Posterior vena cava (tissue), 2 donors: ENCODE measurements at regions of chr19 and their contacts with region 1.

Region 1: DNA sequence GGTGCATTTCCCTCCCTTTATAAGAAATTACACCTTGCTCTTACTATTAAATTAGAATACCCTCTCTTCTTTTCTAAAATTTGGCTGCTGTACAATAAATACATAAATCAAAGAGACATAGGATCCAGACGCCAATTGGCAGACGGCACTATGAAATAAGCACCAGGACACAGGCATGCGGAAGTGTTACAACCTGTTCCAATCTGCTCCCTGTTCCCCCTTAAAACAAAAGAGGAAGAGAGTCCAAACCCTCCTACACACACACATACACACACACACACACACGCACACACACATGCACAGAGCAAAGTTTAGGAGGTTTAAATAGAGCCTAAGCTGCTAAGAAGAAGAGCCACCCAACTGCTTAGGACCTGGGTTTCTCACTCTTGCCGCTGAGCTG is 75.6 kb upstream of the ZNF507 start:
- DNase-seq: no peak

Region 2: DNA sequence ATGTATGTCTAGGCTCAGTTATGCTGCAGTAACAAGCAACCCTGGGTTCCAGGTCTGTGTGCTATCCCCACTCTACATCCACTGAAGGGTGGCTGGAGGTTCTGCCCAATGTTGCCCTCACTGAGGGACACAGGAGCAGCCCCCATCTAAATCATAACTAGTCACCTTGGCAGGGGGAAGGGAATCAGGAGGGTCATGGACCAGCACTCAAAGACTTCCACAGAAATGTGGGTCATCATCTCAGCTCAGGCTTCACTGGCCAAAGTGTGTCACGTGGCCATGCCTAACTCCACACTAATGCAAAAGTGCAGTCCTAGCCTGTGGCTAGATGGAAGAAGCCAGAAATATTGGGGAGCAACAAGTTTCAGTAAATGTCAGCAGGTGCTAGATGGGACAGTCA is 61.8 kb before region 1 on chr19:
- intact Hi-C with region 1: no loop called
- DNase-seq: no peak

Region 3: GRCh38 chr19:32308436-32309077 is 38.7 kb after region 1 on chr19:
- intact Hi-C with region 1: loop called in 1 of 2 experiments (anchors 1 kb)
- DNase-seq: no peak

Region 4: GRCh38 chr19:33719366-33720154 is 1449.7 kb after region 1 on chr19:
- intact Hi-C with region 1: loop called in 1 of 2 experiments (anchors 5 kb)
- DNase-seq: peak; percentile 32